Activated CD4-positive, alpha-beta memory T cell treated with anti-CD3 and anti-CD28 coated beads for 36 hours (primary cell): ENCODE measurements at regions of chr14 and their contacts with region 1.

Region 1: DNA sequence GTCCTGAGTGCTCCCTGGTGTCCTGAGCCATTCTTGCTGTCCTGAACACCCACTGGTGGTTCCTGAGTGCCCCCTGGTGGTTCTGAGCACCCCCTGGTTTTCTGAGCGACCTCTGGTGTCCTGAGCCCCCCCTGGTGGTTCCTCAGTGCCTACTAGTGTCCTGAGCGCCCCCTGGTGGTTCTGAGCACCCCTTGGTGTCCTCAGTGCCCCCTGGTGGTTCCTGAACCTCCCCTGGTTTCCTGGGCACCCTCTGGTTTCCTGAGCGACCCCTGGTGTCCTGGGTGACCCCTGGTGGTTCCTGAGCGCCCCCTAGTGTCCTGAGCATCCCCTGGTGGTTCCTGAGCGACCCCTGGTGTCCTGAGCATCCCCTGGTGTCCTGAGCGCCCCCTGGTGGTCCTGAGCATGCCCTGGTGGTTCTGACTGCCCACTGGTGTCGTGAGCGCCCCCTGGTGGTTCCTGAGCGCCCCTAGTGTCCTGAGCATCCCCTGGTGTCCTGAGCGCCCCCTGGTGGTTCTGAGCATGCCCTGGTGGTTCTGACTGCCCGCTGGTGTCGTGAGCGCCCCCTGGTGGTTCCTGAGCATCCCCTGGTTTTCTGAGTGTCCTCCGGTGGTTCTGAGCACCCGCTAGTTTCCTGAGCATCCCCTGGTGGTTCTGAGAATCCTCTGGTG is 473.1 kb downstream of the TMEM121 start:
- DNase-seq: peak; percentile 94
- H3K4me3 Mint-ChIP-seq: peak overlapping the region; percentile 52
- H3K27ac Mint-ChIP-seq: peak overlapping the region; percentile 71
- H3K4me1 Mint-ChIP-seq: peaks cover 46% of the 10 kb centered on the region
- H3K27me3 Mint-ChIP-seq: no peaks in the 10 kb centered on the region

Region 2: GRCh38 chr14:105168979-105169507 is 830.5 kb before region 1 on chr14:
- CTCF ChIA-PET with region 1: no interaction called
- POLR2A ChIA-PET with region 1: no interaction called
- intact Hi-C with region 1: no loop called
- DNase-seq: peak; percentile 41
- H3K4me3 Mint-ChIP-seq: peak overlapping the region; percentile 35
- H3K27ac Mint-ChIP-seq: no peak overlapping the region
- H3K4me1 Mint-ChIP-seq: peaks cover 12% of the 10 kb centered on the region
- H3K27me3 Mint-ChIP-seq: peaks cover 12% of the 10 kb centered on the region

Region 3: GRCh38 chr14:105861985-105862465 is 137.5 kb before region 1 on chr14:
- CTCF ChIA-PET with region 1: interaction called, 3 read pairs
- POLR2A ChIA-PET with region 1: interaction called, 3 read pairs
- intact Hi-C with region 1: loop called (anchors 10 kb)
- DNase-seq: peak; percentile 61
- H3K4me3 Mint-ChIP-seq: peak overlapping the region; percentile 66
- H3K27ac Mint-ChIP-seq: peak overlapping the region; percentile 86
- H3K4me1 Mint-ChIP-seq: peaks cover 41% of the 10 kb centered on the region
- H3K27me3 Mint-ChIP-seq: peaks cover 11% of the 10 kb centered on the region

Region 4: GRCh38 chr14:105974902-105975301 is 24.6 kb before region 1 on chr14:
- CTCF ChIA-PET with region 1: interaction called, 7 read pairs
- POLR2A ChIA-PET with region 1: no interaction called
- intact Hi-C with region 1: loop called (anchors 1 kb)
- DNase-seq: peak; percentile 67
- H3K4me3 Mint-ChIP-seq: no peak overlapping the region
- H3K27ac Mint-ChIP-seq: no peak overlapping the region
- H3K4me1 Mint-ChIP-seq: peaks cover 2% of the 10 kb centered on the region
- H3K27me3 Mint-ChIP-seq: peaks cover 5% of the 10 kb centered on the region

Region 5: DNA sequence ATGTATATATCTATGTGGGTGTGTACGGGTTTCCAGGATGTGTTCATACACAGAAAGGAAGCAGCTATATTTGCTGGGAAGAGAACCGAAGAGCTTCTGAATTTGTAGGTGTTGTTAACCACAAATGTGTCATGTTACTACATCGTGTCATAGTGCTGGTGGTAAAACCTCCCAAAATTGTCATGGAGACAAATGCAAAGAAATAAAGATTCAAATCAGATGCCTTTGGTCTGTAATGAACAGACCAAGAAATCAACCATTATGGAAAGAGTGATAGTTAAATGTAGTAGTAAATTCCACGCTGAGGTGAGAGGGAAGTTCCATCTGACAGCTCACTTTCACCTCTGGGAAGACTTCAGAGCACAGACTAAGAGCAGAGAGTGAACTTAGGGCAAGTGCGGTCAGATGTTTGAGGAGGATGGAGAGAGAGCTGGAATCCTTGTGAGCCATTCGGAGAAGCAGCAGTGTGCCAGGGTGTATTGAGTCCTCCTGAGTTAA is 14.4 kb after region 1 on chr14:
- CTCF ChIA-PET with region 1: interaction called, 41 read pairs
- POLR2A ChIA-PET with region 1: interaction called, 13 read pairs
- intact Hi-C with region 1: no loop called
- DNase-seq: peak; percentile 69
- H3K4me3 Mint-ChIP-seq: peak overlapping the region; percentile 72
- H3K27ac Mint-ChIP-seq: peak overlapping the region; percentile 97
- H3K4me1 Mint-ChIP-seq: peaks cover 77% of the 10 kb centered on the region
- H3K27me3 Mint-ChIP-seq: no peaks in the 10 kb centered on the region

Region 6: DNA sequence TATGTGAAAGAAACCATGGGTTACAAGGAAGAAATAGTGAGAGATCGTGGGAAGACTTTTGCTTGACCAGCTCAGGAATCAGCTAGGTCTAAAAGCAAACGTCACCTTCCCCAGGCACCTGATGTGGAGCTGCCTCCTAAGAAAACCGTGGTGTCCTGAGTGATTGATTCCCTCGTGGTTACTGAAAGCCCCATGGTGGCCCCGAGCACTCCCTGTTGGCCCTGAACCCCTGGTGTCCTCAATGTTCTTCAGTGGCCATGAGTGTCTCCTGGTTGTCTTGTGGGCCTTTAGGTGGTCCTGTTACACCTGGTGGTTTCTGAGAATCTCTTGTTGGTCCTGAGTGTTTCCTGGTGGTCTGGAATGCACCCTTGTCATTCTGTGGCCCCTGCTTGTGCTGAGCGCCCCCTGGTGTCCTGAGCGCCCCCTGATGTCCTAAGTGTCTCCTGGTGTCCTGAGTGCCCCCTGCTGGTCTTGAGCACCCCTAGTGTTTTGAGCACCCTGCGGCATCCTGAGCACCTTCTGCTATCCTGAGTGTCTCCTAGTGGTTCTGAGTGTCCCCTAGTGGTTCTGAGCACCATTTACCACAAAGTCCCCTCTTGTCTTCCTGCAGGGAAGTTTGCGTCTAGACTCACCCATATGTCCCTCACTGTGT is 45.6 kb after region 1 on chr14:
- CTCF ChIA-PET with region 1: interaction called, 24 read pairs
- POLR2A ChIA-PET with region 1: no interaction called
- intact Hi-C with region 1: no loop called
- DNase-seq: peak; percentile 92
- H3K4me3 Mint-ChIP-seq: no peak overlapping the region
- H3K27ac Mint-ChIP-seq: peak overlapping the region; percentile 57
- H3K4me1 Mint-ChIP-seq: peaks cover 12% of the 10 kb centered on the region
- H3K27me3 Mint-ChIP-seq: peaks cover 12% of the 10 kb centered on the region

Region 7: DNA sequence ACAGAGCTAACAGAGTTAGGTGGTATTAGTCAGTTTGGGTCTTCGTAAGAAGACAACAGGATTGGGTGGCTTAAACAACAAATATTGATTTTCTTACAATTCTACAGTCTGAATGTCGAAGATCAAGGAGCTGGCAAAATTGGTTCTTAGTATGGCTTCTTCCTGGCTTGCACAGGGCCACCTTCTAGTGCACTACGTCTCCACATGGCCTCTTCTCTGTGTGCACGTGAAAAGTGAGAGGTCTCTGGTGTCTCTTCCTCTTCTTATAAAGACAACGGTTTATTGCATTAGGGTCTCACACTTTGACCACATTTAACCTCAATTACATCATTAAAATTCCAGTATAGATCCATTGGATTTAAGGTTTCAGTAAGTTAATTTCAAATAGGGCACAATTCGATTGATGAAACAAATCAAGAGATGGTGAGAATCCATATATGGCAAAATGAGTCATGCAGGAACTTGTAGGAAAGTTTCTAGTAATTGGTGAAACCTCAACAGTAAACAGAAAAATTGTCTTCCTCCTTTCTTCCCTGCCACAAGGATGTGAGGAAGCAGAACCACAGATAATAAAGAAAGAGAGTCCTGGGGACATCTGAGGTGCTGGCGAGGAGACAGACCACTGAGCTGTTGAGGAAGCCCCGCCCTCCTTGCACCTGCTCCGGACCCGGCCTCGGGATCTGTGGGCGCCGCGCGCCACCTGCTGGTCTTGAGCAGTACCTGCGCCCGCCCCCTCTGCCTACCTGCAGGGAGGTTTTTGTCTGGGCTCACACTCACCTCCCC is 373.6 kb after region 1 on chr14:
- CTCF ChIA-PET with region 1: no interaction called
- POLR2A ChIA-PET with region 1: no interaction called
- intact Hi-C with region 1: loop called (anchors 10 kb)
- DNase-seq: peak; percentile 90
- H3K4me3 Mint-ChIP-seq: peak overlapping the region; percentile 56
- H3K27ac Mint-ChIP-seq: peak overlapping the region; percentile 21
- H3K4me1 Mint-ChIP-seq: peaks cover 21% of the 10 kb centered on the region
- H3K27me3 Mint-ChIP-seq: peaks cover 12% of the 10 kb centered on the region